Mammary epithelial cell (primary cell): ENCODE measurements at regions of chr17 and their contacts with region 1.

Region 1: GRCh38 chr17:62933501-62934385 is 32.3 kb upstream of the TANC2 start:
- DNase-seq: no peak
- H3K4me3 ChIP-seq: no peak overlapping the region
- H3K27ac ChIP-seq: no peak overlapping the region
- H3K4me1 ChIP-seq: no peaks in the 10 kb centered on the region
- H3K27me3 ChIP-seq: no peaks in the 10 kb centered on the region
- CTCF ChIP-seq: no peak

Region 2: GRCh38 chr17:62898220-62898864 is 35.4 kb before region 1 on chr17:
- CTCF ChIA-PET with region 1: no interaction called
- dilution Hi-C with region 1: loop called (anchors 5 kb)
- in situ Hi-C with region 1: no loop called
- intact Hi-C with region 1: no loop called
- DNase-seq: no peak
- H3K4me3 ChIP-seq: no peak overlapping the region
- H3K27ac ChIP-seq: no peak overlapping the region
- H3K4me1 ChIP-seq: peaks cover 25% of the 10 kb centered on the region
- H3K27me3 ChIP-seq: no peaks in the 10 kb centered on the region
- CTCF ChIP-seq: no peak

Region 3: DNA sequence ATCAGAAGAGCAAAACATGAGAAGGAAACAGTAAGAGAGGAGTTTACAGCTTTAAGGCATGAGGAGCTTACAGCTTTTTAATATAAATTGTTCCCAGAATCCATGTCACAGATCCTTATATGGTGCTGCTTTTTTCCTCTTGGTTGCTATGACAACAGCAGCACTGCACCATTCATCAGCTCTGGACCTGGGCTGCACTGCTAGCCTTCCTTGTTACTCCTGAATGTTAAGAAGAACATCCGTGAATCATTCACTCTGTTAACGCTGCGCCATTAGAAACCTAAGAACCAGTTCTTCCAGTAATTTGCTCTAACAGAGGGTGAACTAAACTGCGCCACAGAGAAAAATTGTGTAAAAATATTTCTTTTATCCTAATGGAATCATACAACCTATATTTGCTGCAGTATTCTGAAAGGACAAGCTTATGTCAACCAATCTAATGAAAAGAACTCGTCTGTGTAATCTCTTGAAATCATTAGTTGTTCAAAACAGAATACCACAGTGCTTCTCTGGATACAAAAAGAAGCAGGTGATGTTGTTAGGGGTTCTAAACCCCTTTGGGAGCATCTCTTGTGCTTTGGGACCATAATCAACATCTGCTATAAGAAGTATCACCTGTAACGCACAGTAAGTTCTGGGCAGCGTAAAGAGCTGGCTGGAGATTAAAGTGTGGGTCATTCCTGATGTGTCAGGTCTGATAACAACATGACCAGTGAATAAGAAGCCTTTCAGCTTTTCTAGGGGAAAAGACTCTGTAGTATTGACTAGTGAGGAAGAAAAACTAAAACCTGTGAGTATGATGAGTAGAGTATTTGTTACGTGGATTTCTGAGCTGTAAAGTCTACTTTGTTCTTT is 183.5 kb after region 1 on chr17:
- CTCF ChIA-PET with region 1: no interaction called
- dilution Hi-C with region 1: no loop called
- in situ Hi-C with region 1: no loop called
- intact Hi-C with region 1: no loop called
- DNase-seq: peak; percentile 11
- H3K4me3 ChIP-seq: no peak overlapping the region
- H3K27ac ChIP-seq: no peak overlapping the region
- H3K4me1 ChIP-seq: no peaks in the 10 kb centered on the region
- H3K27me3 ChIP-seq: no peaks in the 10 kb centered on the region
- CTCF ChIP-seq: no peak